ENCODE measurements at regions of chr16 and their contacts with region 1.

Region 1: DNA sequence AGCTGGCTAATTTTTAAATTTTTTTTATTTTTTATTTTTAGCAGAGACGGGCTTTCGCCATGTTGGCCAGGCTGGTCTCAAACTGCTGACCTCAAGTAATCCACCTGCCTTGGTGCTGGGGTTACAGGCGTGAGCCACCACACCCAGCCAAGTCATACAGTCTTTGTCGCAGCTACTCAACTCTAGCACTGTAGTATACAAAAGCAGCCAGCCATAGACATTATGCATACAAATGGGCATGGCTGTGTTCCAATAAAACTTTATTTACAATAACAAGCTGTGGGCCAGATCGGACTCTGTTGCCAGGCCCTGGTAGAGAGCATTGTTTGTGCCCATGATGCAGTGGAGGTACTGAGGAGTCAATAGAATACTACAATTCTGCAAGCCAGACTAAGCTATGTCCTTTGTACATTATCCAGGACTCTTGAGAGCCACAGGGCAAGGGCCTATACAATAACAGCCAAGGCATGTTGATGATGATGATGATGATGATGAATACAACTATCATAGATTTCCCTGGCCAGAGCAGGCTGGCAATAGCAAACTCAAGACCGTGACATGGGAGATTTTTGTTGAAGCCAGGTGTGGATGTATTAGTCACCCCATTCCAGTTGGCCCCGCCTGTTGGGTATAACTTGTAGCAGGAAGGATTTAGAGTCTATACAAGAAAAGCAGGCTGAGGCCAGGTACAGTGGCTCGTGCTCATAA is 101.8 kb downstream of the MYH11 start:
- DNase-seq: no peak
- ATAC-seq: no peak
- H3K4me3 Mint-ChIP-seq: no peak overlapping the region
- H3K27ac Mint-ChIP-seq: no peak overlapping the region
- H3K4me1 Mint-ChIP-seq: no peaks in the 10 kb centered on the region
- H3K27me3 Mint-ChIP-seq: peaks cover 7% of the 10 kb centered on the region
- CTCF ChIP-seq: no peak

Region 2: DNA sequence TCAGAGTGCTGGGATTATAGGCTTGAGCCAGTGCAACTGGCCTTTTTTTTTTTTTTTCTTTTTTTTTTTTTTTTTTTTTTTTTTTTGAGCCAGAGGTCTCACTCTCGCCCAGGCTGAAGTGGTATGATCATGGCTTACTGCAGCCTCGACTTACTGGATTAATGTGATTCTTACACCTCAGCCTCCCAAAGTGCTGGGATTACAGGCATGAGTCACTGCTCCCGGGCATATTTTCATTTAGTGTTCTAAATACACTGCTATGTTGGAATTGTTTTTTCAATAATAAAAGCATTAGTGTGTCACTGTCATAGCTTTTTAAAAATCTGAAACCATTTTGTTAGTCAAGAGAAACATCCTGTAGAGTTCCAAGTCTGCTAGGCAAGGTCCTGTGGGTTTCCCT is 64.7 kb before region 1 on chr16:
- CTCF ChIA-PET with region 1: no interaction called
- POLR2A ChIA-PET with region 1: no interaction called
- DNase-seq: no peak
- ATAC-seq: no peak
- H3K4me3 Mint-ChIP-seq: no peak overlapping the region
- H3K27ac Mint-ChIP-seq: no peak overlapping the region
- H3K4me1 Mint-ChIP-seq: no peaks in the 10 kb centered on the region
- H3K27me3 Mint-ChIP-seq: no peaks in the 10 kb centered on the region; the same call in 1 of the 2 replicates
- CTCF ChIP-seq: no peak

Region 3: GRCh38 chr16:15765880-15766279 is 10.9 kb after region 1 on chr16:
- CTCF ChIA-PET with region 1: interaction called, 12 read pairs
- POLR2A ChIA-PET with region 1: interaction called, 3 read pairs
- DNase-seq: peak; percentile 26
- ATAC-seq: peak; percentile 90
- H3K4me3 Mint-ChIP-seq: no peak overlapping the region
- H3K27ac Mint-ChIP-seq: no peak overlapping the region
- H3K4me1 Mint-ChIP-seq: peaks cover 6% of the 10 kb centered on the region
- H3K27me3 Mint-ChIP-seq: no peaks in the 10 kb centered on the region
- CTCF ChIP-seq: peak; percentile 32; the same call in 1 of the 2 replicates